Panc1 (cell line): ENCODE measurements at regions of chr19 and their contacts with region 1.

Region 1: GRCh38 chr19:48321622-48322591 is 3.4 kb upstream of the EMP3 start:
- DNase-seq: no peak
- ATAC-seq: peak; percentile 73
- H3K4me3 ChIP-seq: peak overlapping the region; percentile 54 to 67
- H3K27ac ChIP-seq: peak overlapping the region; percentile 96
- H3K4me1 ChIP-seq: peaks cover 14% of the 10 kb centered on the region
- H3K27me3 ChIP-seq: no peaks in the 10 kb centered on the region
- CTCF ChIP-seq: no peak

Region 2: GRCh38 chr19:48543121-48544056 is 221.5 kb after region 1 on chr19:
- CTCF ChIA-PET with region 1: no interaction called
- POLR2A ChIA-PET with region 1: interaction called, 13 read pairs
- in situ Hi-C with region 1: no loop called
- intact Hi-C with region 1: no loop called
- DNase-seq: no peak
- ATAC-seq: peak; percentile 81
- H3K4me3 ChIP-seq: no peak overlapping the region
- H3K27ac ChIP-seq: no peak overlapping the region
- H3K4me1 ChIP-seq: peaks cover 3% of the 10 kb centered on the region
- H3K27me3 ChIP-seq: no peaks in the 10 kb centered on the region
- CTCF ChIP-seq: no peak

Region 3: GRCh38 chr19:48720613-48721296 is 398.8 kb after region 1 on chr19:
- CTCF ChIA-PET with region 1: no interaction called
- POLR2A ChIA-PET with region 1: no interaction called
- in situ Hi-C with region 1: no loop called
- intact Hi-C with region 1: no loop called
- DNase-seq: peak; percentile 87
- ATAC-seq: peak; percentile 90
- H3K4me3 ChIP-seq: peak overlapping the region; percentile 61
- H3K27ac ChIP-seq: peak overlapping the region; percentile 78
- H3K4me1 ChIP-seq: no peaks in the 10 kb centered on the region; the same call in 1 of the 2 replicates
- H3K27me3 ChIP-seq: no peaks in the 10 kb centered on the region
- CTCF ChIP-seq: no peak